IMR-90 (cell line): ENCODE measurements at regions of chr17 and their contacts with region 1.

Region 1: GRCh38 chr17:10697092-10698081 is at the starts of genes ADPRM and SCO1:
- DNase-seq: peak; percentile 93
- ATAC-seq: peak; percentile 98
- H3K4me3 ChIP-seq: peak within 1 kb of the TSS; percentile 77
- H3K27ac ChIP-seq: peak within 1 kb of the TSS; percentile 76
- H3K4me1 ChIP-seq: peaks cover under 1% of the 10 kb centered on the region
- H3K27me3 ChIP-seq: no peaks in the 10 kb centered on the region
- CTCF ChIP-seq: peak; percentile 49
- POLR2A ChIP-seq: peak; percentile 87
- RAD21 ChIP-seq: no peak
- total RNA-seq, gene ADPRM: 10.3 and 12.2 TPM in 2 replicates
- total RNA-seq, gene SCO1: 21.7 and 23.1 TPM in 2 replicates

Region 2: DNA sequence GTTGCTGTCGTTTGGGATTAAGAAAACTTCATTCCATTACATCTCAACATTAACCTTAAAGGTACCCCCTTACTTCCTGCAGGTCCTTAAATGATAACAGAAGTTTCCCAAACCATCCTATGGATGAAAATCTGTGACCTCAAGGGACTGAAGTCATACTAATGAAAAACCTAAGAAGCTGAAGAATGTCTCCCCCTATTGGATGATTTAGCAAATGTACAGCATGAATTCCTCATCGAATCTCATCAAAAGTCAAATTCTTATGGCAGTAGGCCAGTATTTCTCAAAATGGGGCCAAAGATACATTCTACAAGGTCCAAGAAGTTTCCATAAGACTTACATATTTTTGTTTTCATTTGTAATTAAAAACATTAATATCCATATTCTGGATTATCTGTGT is 13.5 kb before region 1 on chr17:
- CTCF ChIA-PET with region 1: no interaction called
- POLR2A ChIA-PET with region 1: no interaction called
- dilution Hi-C with region 1: no loop called
- in situ Hi-C with region 1: no loop called
- intact Hi-C with region 1: loop called (anchors 2 kb)
- DNase-seq: peak; percentile 39
- ATAC-seq: no peak
- H3K4me3 ChIP-seq: no peak overlapping the region
- H3K27ac ChIP-seq: no peak overlapping the region
- H3K4me1 ChIP-seq: peaks cover 2% of the 10 kb centered on the region; the same call in 1 of the 2 replicates
- H3K27me3 ChIP-seq: no peaks in the 10 kb centered on the region
- CTCF ChIP-seq: peak; percentile 52
- POLR2A ChIP-seq: no peak
- RAD21 ChIP-seq: peak; percentile 34